Activated B cell treated with CpG ODN at 0.5 μM for 24 hours (primary cell): ENCODE measurements at regions of chr12 and their contacts with region 1.

Region 1: DNA sequence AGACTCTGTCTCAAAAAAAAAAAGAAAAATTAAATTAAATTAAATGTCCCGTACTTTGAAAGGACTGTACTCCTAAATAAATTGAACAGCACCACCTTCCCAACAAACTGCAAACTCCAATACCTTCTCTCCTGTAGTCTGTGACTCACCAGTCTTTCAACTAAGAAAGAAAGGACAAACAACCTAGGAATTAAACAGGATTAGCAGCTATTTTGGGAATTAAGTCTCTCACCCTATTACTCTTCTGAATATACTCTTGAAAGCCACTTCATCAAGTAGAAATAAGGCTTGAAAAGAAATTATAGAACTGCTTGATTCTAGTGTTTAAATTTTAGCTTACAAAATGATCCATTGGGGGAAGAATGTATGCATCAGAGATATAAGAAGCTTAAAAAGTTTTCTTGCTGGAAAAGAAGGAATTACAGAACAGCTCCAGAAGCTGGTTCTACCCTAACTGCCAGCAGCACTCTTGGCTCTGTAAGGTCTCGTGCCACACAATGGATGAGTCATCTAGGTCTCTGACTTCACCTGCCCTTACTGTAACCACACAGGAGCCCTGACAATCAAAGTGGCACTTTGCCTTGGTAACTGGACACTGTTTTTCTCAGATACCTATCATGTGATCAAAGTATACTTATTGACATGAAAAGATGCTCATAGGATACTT is 57.0 kb upstream of the CERS5 start:
- DNase-seq: no peak
- ATAC-seq: peak; percentile 60
- H3K4me3 Mint-ChIP-seq: peak overlapping the region; percentile 32
- H3K27ac Mint-ChIP-seq: no peak overlapping the region
- H3K4me1 Mint-ChIP-seq: peaks cover 19% of the 10 kb centered on the region
- H3K27me3 Mint-ChIP-seq: no peaks in the 10 kb centered on the region
- CTCF ChIP-seq: no peak

Region 2: DNA sequence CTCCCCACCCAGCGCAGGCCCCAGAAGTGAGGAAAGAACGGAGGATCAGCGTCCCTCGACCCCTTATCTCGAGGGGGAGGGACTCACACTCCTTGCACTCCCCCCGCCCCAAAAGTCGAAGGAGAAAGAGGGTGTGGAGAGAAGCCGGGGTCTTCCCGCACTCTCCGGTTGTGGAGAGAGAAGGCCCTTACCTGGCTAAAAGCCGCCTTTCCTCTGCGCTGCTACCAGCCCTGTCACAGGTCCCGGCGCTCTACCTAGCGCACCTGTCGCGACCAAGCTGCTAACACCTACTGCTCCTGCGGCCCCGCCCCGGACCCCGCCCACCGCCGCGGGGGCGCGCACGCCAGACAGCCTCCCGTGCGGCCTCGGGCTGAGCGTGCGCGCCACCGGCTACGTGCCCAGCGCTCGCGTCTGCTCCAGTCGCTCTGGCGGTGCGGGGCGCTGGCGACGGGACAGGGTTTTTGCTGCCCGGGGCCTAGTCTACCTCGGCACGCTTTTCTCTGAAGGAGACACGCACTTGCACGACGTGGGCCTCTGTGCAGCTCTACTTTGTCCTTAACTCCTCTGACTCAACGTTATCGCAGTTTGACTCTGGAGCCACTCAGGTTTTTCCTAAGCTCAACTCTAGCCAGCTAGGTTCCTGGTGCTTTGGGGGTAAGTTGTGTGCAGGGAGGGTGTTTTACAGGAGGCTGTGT is 59.2 kb after region 1 on chr12 and contains the start of gene LIMA1:
- CTCF ChIA-PET with region 1: no interaction called
- POLR2A ChIA-PET with region 1: interaction called, 4 read pairs
- intact Hi-C with region 1: loop called (anchors 2 kb)
- DNase-seq: peak; percentile 95
- ATAC-seq: peak; percentile 97
- H3K4me3 Mint-ChIP-seq: peak within 1 kb of the TSS; percentile 91
- H3K27ac Mint-ChIP-seq: peak within 1 kb of the TSS; percentile 71
- H3K4me1 Mint-ChIP-seq: peaks cover 17% of the 10 kb centered on the region
- H3K27me3 Mint-ChIP-seq: no peaks in the 10 kb centered on the region
- CTCF ChIP-seq: no peak
- total RNA-seq, gene LIMA1: 5.7 and 6.7 TPM in 2 replicates